Gastrocnemius medialis (tissue), 4 donors: ENCODE measurements at regions of chr4 and their contacts with region 1.

Region 1: DNA sequence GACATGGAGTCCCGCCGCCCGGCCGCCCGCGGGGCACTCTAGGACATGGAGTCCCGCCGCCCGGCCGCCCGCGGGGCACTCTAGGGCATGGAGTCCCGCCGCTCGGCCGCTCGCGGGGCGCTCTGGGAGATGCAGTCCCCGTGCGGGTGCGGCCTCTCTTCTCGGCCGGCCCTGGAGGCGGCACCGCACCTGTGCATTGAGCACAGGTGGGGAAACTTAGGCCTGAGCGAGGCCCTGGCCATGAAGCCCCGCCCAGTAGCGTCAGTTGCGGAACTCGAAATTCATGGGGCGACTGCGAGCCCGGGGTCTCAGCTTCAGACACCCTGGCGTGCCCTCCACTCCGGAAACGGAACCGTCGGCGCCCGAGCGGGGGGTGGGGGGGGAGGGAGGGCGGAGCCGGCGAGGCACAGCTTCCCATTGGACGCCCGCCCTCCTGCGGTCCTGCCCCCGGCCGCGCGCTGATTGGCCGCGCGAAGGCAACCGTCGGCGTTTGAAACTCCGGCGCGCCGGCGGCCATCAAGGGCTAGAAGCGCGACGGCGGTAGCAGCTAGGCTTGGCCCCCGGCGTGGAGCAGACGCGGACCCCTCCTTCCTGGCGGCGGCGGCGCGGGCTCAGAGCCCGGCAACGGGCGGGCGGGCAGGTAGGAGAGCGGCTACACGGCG is at the starts of genes TACC3 and TMEM129:
- DNase-seq: peak; percentile 93 to 96
- ATAC-seq: peak; percentile 94 to 96
- H3K4me3 ChIP-seq: peak within 1 kb of the TSS; percentile 79 to 95 (median 83)
- H3K27ac ChIP-seq: peak within 1 kb of the TSS; percentile 94 to 98 (median 97)
- H3K4me1 ChIP-seq: peaks cover 24 to 27% of the 10 kb centered on the region in 2 donors
- H3K27me3 ChIP-seq: no peaks in the 10 kb centered on the region
- CTCF ChIP-seq: no peak
- POLR2A ChIP-seq: peak; percentile 74 to 80
- total RNA-seq, gene TACC3: 1.5 to 3.2 (median 1.9) TPM
- total RNA-seq, gene TMEM129: 30.3 to 78.0 (median 44.2) TPM

Region 2: DNA sequence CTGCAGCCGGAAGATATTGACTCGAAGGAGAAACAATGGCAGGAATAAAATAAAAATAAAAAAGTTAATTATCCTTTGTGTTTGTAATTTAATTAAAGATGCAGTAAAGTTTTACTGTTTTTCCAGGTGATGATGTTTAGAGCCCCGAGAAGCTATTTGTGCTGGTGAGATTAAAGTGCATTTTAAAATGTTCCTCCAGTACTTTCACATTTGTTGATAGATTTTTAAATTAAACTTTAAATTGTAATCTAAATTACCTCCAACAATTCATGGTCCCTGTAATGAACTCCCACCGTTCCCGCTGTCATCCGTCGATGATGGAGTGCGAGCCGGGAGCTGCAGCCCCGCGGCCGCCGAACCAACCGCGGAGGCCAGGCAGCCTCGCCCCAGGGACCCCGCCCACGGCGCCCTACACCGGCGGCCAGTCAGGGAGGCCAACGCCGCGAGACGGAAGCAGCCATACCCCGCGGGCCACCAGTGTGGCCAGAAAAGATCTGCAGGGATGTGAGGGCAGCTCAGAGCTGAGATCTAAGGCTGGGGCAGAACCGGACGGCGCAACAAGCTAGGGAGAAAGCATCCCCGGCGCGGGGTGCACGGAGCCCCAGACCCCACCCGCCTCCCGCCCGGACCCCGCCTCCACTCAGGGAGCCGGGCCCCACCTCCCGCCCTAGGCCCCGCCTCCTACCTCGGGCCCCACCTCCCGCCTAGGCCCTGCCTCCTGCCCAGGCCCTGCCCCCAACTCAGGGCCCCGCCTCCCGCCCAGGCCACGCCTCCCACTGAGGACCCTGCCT is 141.0 kb before region 1 on chr4:
- in situ Hi-C with region 1: no loop called
- intact Hi-C with region 1: loop called (anchors 10 kb)
- DNase-seq: peak; percentile 78 to 83
- ATAC-seq: peak; percentile 70 to 72
- H3K4me3 ChIP-seq: peak overlapping the region; percentile 50 to 62 (median 55)
- H3K27ac ChIP-seq: peak overlapping the region; percentile 57 to 74 (median 64)
- H3K4me1 ChIP-seq: peaks cover 0 to 5% of the 10 kb centered on the region in 2 donors
- H3K27me3 ChIP-seq: peaks cover 24 to 52% (median 35%) of the 10 kb centered on the region in 3 donors
- CTCF ChIP-seq: no peak
- POLR2A ChIP-seq: peak; percentile 17 to 22